AG04449 (cell line): ENCODE measurements at regions of chr12 and their contacts with region 1.

Region 1: GRCh38 chr12:103771466-103771865 is 69.6 kb downstream of the NT5DC3 start:
- DNase-seq: no peak
- H3K4me3 ChIP-seq: no peak overlapping the region
- CTCF ChIP-seq: peak; percentile 79

Region 2: GRCh38 chr12:103470664-103471063 is 300.8 kb before region 1 on chr12:
- CTCF ChIA-PET with region 1: no interaction called
- POLR2A ChIA-PET with region 1: no interaction called
- DNase-seq: no peak
- H3K4me3 ChIP-seq: no peak overlapping the region
- CTCF ChIP-seq: no peak

Region 3: DNA sequence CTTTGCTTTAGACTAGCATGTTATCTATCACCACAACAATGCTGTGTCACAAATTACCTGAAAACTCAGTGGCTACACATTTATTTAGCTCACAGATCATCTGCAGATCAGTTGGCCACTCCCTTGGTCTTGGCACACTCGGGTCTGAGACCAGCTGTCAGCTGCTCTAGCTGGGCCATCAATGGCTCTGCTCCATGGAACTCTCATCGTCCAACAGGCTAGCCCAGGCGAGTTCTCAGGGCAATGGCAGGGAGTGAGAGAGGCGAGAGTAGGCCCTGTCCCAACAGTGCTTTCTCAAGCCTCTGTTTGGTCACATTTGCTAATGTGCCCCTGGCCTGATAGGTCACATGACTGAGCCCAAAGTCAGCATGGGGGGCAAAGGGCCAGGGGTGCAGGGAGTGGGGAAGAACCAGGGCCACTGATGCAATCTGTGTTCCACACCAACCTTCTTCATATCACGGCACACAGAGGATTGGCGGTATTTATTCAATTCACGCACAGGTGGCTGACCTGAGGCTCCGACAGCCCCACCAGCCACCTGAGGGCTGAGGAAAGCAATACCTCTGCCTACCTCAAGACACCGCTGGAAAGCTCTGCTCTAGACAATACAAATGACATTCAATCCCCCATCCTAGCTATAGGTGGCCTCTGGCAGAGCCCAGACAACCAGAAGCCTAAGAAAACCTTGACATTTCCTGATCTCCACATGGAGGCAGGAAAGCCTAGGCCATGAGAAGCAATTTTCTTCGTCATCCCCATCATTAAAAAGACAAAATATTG is 13.0 kb before region 1 on chr12:
- CTCF ChIA-PET with region 1: interaction called, 11 read pairs
- POLR2A ChIA-PET with region 1: no interaction called
- DNase-seq: no peak
- H3K4me3 ChIP-seq: no peak overlapping the region
- CTCF ChIP-seq: no peak

Region 4: DNA sequence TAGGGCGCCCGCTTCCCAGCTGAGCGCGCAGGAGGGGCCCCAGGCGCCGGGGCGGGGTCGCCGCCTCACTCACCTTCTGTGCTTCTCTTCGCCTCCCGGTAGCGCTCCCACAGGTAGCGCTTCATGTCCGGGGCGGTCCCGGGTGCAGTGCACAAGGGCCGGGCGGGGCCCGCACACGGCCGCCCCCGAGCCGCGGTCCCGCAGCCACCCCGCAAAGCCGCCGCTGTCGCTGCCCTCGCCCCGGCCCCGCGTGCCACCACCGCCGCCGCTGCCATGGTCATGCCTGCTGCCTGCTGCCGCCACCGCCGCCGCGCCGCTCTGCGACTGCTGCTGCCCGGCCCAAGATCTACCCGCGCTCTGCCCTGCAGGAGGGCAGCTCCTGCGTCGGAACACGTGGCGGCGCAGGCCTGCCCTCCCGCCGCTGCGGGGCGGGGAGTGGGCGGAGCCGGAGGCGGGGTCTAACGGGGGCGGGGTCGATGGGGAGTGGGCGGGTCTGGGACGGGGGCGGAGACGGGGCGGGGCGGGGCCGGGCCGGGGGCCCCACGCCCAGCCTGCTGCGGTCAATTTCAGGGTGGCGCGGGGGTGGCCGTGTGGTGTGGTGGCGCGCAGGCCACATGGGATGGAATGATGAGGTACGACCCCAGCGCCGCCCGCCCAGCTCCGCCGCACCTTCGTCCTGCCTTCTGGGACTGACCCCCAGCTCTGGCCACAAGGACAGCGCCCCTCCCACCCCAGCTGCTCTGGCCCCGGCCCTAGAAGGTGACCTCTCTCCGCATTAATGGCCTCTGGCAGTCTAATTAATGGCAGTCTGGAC is 69.6 kb after region 1 on chr12 and contains the start of gene NT5DC3:
- CTCF ChIA-PET with region 1: interaction called, 11 read pairs
- POLR2A ChIA-PET with region 1: no interaction called
- DNase-seq: no peak
- H3K4me3 ChIP-seq: peak within 1 kb of the TSS; percentile 67
- CTCF ChIP-seq: peak; percentile 32

Region 5: DNA sequence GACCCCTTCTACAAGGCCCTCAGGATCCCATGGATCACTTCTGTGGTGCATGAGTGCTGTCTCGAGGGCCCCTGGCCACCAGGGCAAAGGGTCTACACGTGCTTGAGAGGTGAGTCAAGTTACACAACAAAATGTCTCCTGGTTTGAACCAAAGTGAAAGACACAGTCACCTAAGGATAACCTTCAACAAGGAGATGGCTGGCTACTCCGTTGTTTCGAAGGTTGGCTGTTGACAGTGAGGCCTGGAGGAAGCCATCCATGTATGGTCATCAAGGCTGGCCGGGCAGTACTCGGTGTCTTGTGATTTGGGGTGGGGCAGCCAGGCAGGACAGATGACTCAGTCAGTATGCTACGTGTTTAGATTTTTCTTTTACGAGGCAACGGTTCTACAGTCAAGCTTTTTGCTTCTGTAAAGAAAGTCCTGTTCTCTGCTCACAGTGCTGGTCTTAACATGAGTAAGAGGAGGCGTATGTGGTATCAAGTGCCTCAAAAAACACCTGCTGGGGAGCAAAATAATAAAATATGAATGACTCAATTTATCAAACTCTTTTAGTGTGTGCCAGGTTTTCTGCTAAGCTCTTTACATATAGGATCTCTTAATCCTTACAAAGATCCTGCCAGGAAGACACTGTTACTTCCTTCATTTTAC is 87.6 kb after region 1 on chr12:
- CTCF ChIA-PET with region 1: interaction called, 13 read pairs
- POLR2A ChIA-PET with region 1: no interaction called
- DNase-seq: peak; percentile 95
- H3K4me3 ChIP-seq: no peak overlapping the region
- CTCF ChIP-seq: no peak

Region 6: DNA sequence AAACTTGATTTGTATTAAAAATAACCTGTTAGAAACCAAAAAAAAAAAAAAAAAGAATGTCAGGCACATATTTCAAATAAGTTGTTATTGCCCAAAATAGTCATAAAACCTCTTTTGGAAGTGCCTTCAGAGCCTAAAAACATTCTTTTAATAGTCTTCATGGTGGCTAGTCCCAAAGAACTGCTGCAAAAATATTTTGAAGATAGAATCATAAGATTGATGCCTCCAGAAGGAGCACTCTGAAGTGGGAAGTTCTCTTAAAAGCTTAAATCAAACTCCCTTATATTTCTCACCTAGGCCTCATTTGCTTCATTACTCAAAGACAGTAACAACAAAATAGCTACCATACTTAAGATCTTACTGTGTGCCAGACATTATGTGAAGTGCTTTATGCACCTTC is 96.7 kb after region 1 on chr12:
- CTCF ChIA-PET with region 1: interaction called, 189 read pairs
- POLR2A ChIA-PET with region 1: interaction called, 4 read pairs
- DNase-seq: peak; percentile 33
- H3K4me3 ChIP-seq: no peak overlapping the region
- CTCF ChIP-seq: no peak

Region 7: DNA sequence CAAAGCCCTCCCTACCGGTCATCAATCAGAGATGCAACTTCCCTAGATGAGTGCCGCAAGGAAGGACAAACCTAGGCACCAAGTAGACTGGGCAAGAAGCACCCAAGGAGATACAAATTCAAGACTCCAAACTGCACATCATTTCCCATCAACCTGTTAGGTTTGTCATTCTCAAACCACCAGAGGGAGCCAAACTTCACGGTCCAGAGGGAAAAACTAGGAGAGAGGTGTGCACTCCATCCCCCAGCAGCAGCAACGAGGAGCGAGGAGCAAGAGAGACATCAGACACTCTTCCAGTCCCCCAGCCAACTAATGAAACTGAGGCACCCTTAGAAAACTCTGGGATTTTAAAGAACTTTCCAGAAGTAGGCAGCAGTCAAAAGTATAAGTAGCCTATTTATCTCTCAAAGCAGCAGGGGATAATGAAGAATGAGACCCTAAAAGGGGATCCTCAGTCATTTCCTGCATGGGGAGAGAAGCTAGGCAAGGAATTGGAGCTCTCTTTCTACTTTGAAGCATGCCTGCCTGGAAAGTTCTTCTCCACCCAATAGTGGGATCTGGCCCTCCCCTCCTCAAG is 106.6 kb after region 1 on chr12:
- CTCF ChIA-PET with region 1: interaction called, 26 read pairs
- POLR2A ChIA-PET with region 1: interaction called, 3 read pairs
- DNase-seq: no peak
- H3K4me3 ChIP-seq: no peak overlapping the region
- CTCF ChIP-seq: peak; percentile 78